ENCODE measurements at regions of chr1 and their contacts with region 1.

Region 1: DNA sequence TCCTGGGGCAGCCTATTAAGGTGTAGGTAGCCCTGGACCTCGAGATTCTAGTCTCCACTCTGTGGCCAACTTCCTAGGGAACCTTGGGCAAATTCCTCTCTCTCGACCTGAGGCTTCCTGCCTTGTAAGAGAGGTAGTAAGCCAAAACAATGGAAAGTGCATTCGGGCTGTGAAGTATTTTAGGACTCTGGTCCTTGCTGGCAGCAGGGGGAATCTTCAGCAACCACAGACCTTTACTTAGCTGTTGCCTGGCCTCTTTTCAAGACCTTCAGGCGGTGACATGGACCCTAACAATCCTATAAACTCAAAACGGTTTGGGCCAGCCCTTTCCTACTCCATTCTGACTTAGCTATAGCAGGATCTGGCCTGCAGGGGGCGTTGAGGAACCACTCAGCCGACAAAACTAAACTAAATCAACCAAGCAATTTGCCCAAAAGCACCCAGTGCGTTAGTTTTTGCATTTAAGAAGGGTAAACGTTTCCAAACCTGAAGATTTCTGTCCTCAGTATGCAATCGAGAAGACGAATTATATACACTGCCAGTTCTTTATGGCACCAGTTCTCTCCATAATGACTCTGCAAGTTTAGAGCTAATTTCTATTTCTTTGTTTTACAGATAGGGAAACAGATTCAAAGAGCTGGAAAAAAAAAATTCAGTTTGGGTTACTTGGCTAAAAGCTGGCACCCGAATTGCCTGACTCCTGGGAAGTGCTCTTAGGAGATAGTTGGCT is 10.9 kb upstream of the SESN2 start:
- DNase-seq: peak; percentile 67 to 86 (median 80)
- ATAC-seq: peak; percentile 36
- H3K4me3 ChIP-seq: peak overlapping the region; percentile 75
- H3K4me3 Mint-ChIP-seq: peak overlapping the region; percentile 80 to 99 (median 90)
- H3K27ac ChIP-seq: peak overlapping the region; percentile 95
- H3K27ac Mint-ChIP-seq: peak overlapping the region; percentile 90 to 100 (median 94)
- H3K4me1 ChIP-seq: peaks cover 46 to 52% of the 10 kb centered on the region in 2 donors
- H3K4me1 Mint-ChIP-seq: peaks cover 38 to 52% (median 49%) of the 10 kb centered on the region in 7 donors
- H3K27me3 ChIP-seq: no peaks in the 10 kb centered on the region
- H3K27me3 Mint-ChIP-seq: no peaks in the 10 kb centered on the region

Region 2: DNA sequence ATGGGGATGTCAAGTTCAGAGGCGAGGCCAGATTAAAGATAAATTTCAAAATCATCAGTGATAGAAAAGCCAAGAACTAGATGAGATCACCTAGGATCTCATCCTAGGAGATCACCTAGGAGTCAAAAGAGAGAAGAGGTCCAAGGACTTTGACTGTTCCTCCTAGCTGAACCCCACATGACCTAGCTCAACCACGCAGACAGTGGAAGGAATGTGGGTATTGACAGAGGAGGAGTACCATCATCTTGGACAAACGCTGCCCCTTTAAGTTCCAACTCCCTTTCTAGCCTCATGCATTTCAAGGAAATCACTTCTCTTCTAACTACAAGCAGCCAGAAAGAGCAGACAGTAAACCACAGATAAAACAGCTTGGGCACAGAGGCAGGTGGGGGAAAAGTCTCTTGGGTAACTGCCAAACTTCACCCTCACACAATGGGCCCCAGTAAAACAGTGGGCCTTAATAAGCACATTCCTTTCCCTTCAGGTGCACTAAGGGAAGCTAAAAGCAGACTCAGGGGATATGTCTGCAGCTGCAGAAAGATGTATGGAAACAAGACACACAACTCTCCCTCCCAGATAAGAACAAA is 535.2 kb before region 1 on chr1:
- CTCF ChIA-PET with region 1: no interaction called
- POLR2A ChIA-PET with region 1: no interaction called
- intact Hi-C with region 1: no loop called
- DNase-seq: no peak
- ATAC-seq: no peak
- H3K4me3 ChIP-seq: no peak overlapping the region
- H3K4me3 Mint-ChIP-seq: no peak overlapping the region
- H3K27ac ChIP-seq: no peak overlapping the region
- H3K27ac Mint-ChIP-seq: no peak overlapping the region
- H3K4me1 ChIP-seq: no peaks in the 10 kb centered on the region
- H3K4me1 Mint-ChIP-seq: peaks cover 0 to 7% (median 2%) of the 10 kb centered on the region in 7 donors
- H3K27me3 ChIP-seq: no peaks in the 10 kb centered on the region
- H3K27me3 Mint-ChIP-seq: peaks cover 6 to 27% (median 17%) of the 10 kb centered on the region in 5 donors

Region 3: GRCh38 chr1:27725374-27726173 is 522.9 kb before region 1 on chr1 and contains the start of gene FAM76A:
- CTCF ChIA-PET with region 1: no interaction called
- POLR2A ChIA-PET with region 1: no interaction called
- intact Hi-C with region 1: loop called in 1 of 2 experiments (anchors 5 kb)
- DNase-seq: peak; percentile 97 to 100 (median 99)
- ATAC-seq: peak; percentile 97
- H3K4me3 ChIP-seq: peak within 1 kb of the TSS; percentile 77
- H3K4me3 Mint-ChIP-seq: peak within 1 kb of the TSS; percentile 86 to 93 (median 90)
- H3K27ac ChIP-seq: peak within 1 kb of the TSS; percentile 91
- H3K27ac Mint-ChIP-seq: peak within 1 kb of the TSS; percentile 93 to 100 (median 98)
- H3K4me1 ChIP-seq: peaks cover 7 to 17% of the 10 kb centered on the region in 2 donors
- H3K4me1 Mint-ChIP-seq: peaks cover 9 to 35% (median 28%) of the 10 kb centered on the region in 7 donors
- H3K27me3 ChIP-seq: no peaks in the 10 kb centered on the region
- H3K27me3 Mint-ChIP-seq: no peaks in the 10 kb centered on the region
- total RNA-seq, gene FAM76A: 15.2 to 25.2 (median 22.2) TPM

Region 4: DNA sequence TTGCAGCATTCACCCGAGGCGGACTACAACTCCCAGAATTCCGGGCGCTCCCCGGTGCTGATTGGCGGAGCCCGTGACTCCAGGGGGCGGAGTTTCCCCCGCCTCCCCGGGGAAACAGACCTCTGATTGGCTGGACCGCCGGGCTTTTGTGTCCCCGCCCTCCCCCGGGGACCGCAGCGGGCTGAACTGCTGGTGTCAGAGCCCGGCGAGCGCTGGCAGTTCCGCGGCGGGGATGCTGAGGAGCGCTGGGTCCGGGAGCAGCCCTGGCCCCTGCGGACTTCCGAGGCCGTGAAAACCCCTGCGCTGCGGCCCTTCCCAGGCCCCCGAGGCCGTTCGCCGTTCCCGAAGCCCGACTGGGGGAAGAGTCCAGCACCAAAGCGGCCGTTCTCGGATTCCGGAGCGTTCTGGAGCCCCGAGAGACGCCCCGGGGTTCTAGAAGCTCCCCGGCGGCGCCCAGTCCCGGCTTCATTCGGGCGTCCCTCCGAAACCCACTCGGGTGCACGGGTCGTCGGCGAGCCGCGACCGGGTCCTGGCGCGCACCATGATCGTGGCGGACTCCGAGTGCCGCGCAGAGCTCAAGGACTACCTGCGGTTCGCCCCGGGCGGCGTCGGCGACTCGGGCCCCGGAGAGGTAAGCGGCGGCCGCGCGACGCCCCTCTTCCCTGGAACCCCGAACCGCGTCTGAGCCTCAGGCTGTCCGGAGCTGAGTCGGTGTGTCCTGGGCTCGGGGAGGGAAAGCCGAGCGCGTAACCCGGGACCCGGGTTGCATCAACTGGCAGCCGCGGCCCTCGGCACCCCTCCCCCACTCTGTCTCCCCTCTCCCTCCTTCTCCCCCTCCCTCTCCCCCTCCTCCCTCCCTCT is 11.1 kb after region 1 on chr1 and contains the start of gene SESN2:
- CTCF ChIA-PET with region 1: interaction called, 22 read pairs
- POLR2A ChIA-PET with region 1: interaction called, 43 read pairs
- intact Hi-C with region 1: loop called (anchors 1 kb)
- DNase-seq: peak; percentile 97 to 99 (median 99)
- ATAC-seq: peak; percentile 98
- H3K4me3 ChIP-seq: peak within 1 kb of the TSS; percentile 95
- H3K4me3 Mint-ChIP-seq: peak within 1 kb of the TSS; percentile 65 to 90 (median 82)
- H3K27ac ChIP-seq: peak within 1 kb of the TSS; percentile 77
- H3K27ac Mint-ChIP-seq: peak within 1 kb of the TSS; percentile 58 to 96 (median 74)
- H3K4me1 ChIP-seq: peaks cover 38 to 47% of the 10 kb centered on the region in 2 donors
- H3K4me1 Mint-ChIP-seq: peaks cover 32 to 54% (median 49%) of the 10 kb centered on the region in 7 donors
- H3K27me3 ChIP-seq: no peaks in the 10 kb centered on the region
- H3K27me3 Mint-ChIP-seq: peaks cover 0 to 2% (median 0%) of the 10 kb centered on the region in 5 donors
- total RNA-seq, gene SESN2: 4.5 to 50.7 (median 11.8) TPM

Region 5: DNA sequence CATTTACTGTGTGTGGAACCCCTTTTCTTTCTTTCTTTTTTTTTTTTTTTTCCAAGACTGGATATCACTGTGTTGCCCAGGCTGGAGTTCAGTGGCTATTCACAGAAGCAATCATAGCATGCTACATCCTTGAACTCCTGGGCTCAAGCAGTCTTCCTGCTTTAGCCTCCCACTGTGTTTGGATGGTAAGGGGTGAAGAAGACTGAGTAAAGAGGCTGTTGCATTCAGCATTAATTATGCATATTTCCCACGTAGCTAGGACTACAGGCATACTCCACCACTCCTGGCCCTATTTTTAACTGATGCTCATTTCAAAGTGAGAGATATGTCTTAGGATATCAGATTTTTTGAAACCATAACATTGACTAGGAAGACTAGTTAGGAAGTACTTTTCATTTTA is 160.6 kb after region 1 on chr1:
- CTCF ChIA-PET with region 1: no interaction called
- POLR2A ChIA-PET with region 1: no interaction called
- intact Hi-C with region 1: loop called in 1 of 2 experiments (anchors 1 kb)
- DNase-seq: no peak
- ATAC-seq: no peak
- H3K4me3 ChIP-seq: no peak overlapping the region
- H3K4me3 Mint-ChIP-seq: no peak overlapping the region
- H3K27ac ChIP-seq: no peak overlapping the region
- H3K27ac Mint-ChIP-seq: peak overlapping the region in 1 of 9 donors; percentile 39
- H3K4me1 ChIP-seq: no peaks in the 10 kb centered on the region
- H3K4me1 Mint-ChIP-seq: peaks cover 0 to 14% (median 11%) of the 10 kb centered on the region in 7 donors
- H3K27me3 ChIP-seq: no peaks in the 10 kb centered on the region
- H3K27me3 Mint-ChIP-seq: no peaks in the 10 kb centered on the region

Region 6: DNA sequence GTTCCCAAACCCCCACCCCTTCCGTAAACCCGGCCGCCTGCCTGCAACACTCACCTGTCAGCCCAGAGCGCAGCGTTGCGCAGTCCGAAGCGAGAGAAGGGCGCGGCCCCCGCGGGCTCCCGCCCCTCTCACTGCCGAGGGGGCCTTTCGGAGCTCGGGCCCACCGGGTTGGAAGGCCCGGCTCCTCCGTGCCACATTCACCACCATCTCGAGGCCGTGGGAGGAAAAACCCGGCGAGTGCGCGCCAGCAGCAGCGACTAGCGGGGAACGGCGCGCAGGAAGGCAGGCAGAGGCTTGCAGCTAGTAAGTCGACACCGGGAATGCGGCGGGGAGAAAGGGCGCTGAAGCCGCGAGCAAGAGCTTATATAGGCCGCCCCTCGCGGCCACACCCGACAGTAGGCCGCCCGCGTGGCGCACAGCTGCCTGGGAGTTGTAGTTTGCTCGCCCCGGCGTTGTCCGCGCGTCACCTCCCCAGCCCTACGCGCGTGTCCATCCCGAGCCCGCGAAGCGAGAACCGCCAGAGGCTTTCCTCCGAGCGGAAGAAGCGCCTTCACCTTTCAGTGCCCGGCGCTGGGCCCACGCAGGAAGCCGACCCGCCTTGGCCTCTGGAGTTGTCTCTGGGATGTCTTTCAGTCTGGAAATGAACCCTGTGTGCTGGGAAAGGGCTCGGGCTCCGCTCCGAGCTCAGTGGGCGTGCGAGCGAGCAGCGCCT is 333.2 kb after region 1 on chr1:
- CTCF ChIA-PET with region 1: no interaction called
- POLR2A ChIA-PET with region 1: interaction called, 10 read pairs
- intact Hi-C with region 1: loop called (anchors 1 to 5 kb)
- DNase-seq: peak; percentile 85 to 96 (median 91)
- ATAC-seq: peak; percentile 95
- H3K4me3 ChIP-seq: peak overlapping the region; percentile 93
- H3K4me3 Mint-ChIP-seq: peak overlapping the region; percentile 94 to 99 (median 97)
- H3K27ac ChIP-seq: peak overlapping the region; percentile 84
- H3K27ac Mint-ChIP-seq: peak overlapping the region; percentile 86 to 96 (median 93)
- H3K4me1 ChIP-seq: peaks cover 20 to 23% of the 10 kb centered on the region in 2 donors
- H3K4me1 Mint-ChIP-seq: peaks cover 22 to 48% (median 37%) of the 10 kb centered on the region in 7 donors
- H3K27me3 ChIP-seq: no peaks in the 10 kb centered on the region
- H3K27me3 Mint-ChIP-seq: no peaks in the 10 kb centered on the region

Region 7: GRCh38 chr1:28668191-28668955 is 419.9 kb after region 1 on chr1 and contains the start of gene GMEB1:
- CTCF ChIA-PET with region 1: no interaction called
- POLR2A ChIA-PET with region 1: interaction called, 3 read pairs
- intact Hi-C with region 1: loop called in 1 of 2 experiments (anchors 2 kb)
- DNase-seq: peak; percentile 70 to 91 (median 82)
- ATAC-seq: peak; percentile 81
- H3K4me3 ChIP-seq: peak within 1 kb of the TSS; percentile 81
- H3K4me3 Mint-ChIP-seq: peak within 1 kb of the TSS; percentile 89 to 97 (median 94)
- H3K27ac ChIP-seq: peak within 1 kb of the TSS; percentile 98
- H3K27ac Mint-ChIP-seq: peak within 1 kb of the TSS; percentile 94 to 100 (median 98)
- H3K4me1 ChIP-seq: peaks cover 3 to 6% of the 10 kb centered on the region in 2 donors
- H3K4me1 Mint-ChIP-seq: peaks cover 11 to 37% (median 25%) of the 10 kb centered on the region in 7 donors
- H3K27me3 ChIP-seq: no peaks in the 10 kb centered on the region
- H3K27me3 Mint-ChIP-seq: no peaks in the 10 kb centered on the region
- total RNA-seq, gene GMEB1: 15.8 to 26.7 (median 18.4) TPM